ENCODE measurements at regions of chr17 and their contacts with region 1.

Region 1: DNA sequence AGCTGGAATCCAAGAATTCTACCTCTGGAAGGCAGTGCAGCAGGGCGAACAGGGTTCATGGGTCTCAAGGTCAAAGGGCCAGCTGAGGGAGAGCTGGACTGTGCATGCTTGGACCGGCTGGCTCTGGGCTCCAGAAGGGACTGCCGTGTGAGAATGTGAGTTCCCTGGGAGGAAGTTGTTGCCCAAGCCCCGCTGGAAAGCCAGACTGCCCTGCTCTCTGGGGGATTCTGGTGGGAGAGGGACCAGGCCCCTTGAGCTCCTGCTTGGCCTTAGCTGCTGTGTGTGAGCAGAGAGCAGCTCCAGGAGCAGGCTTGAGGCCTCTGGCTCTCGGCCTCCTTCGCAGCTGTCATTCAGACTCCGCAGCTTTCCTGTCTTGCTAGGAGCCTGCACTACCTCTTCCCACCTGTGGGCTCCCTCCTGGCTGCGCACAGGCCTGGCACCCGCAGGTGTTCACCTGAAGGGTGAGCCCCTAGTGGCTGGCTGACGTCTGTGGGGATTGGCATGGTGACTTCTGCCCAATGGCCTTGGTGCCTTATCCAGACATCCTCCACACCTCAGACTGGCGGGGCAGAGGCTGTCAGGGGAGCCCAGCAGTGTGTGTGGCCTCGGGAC is 84.8 kb downstream of the NT5M start:
- DNase-seq: peak; percentile 75
- ATAC-seq: peak; percentile 99
- H3K4me3 Mint-ChIP-seq: no peak overlapping the region
- H3K27ac Mint-ChIP-seq: no peak overlapping the region
- H3K4me1 Mint-ChIP-seq: no peaks in the 10 kb centered on the region
- H3K27me3 Mint-ChIP-seq: no peaks in the 10 kb centered on the region
- CTCF ChIP-seq: peak; percentile 43; the same call in 1 of the 2 replicates

Region 2: GRCh38 chr17:17322516-17323510 is 65.1 kb before region 1 on chr17:
- CTCF ChIA-PET with region 1: no interaction called
- POLR2A ChIA-PET with region 1: no interaction called
- DNase-seq: no peak
- ATAC-seq: no peak
- H3K4me3 Mint-ChIP-seq: no peak overlapping the region
- H3K27ac Mint-ChIP-seq: no peak overlapping the region
- H3K4me1 Mint-ChIP-seq: no peaks in the 10 kb centered on the region
- H3K27me3 Mint-ChIP-seq: no peaks in the 10 kb centered on the region
- CTCF ChIP-seq: no peak

Region 3: DNA sequence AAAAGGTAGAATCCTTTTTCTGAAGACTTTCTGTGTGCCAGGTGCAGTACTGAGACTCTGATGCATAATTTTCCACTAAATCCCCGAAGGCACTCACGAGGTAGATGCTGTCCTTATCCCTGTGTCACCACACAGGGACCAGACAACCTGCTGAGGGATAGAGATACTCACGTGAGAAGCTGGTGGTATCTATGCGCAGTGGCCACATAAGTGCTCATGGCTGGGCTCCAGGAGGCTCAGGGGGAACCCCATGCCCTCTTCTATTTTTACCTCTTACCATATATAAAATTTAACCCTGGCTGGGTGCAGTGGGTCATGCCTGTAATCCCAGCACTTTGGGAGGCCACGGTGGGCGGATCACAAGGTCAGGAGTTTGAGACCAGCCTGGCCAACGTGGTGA is 46.5 kb before region 1 on chr17:
- CTCF ChIA-PET with region 1: no interaction called
- POLR2A ChIA-PET with region 1: no interaction called
- DNase-seq: no peak
- ATAC-seq: no peak
- H3K4me3 Mint-ChIP-seq: no peak overlapping the region
- H3K27ac Mint-ChIP-seq: no peak overlapping the region
- H3K4me1 Mint-ChIP-seq: no peaks in the 10 kb centered on the region
- H3K27me3 Mint-ChIP-seq: no peaks in the 10 kb centered on the region
- CTCF ChIP-seq: no peak

Region 4: GRCh38 chr17:17366941-17367875 is 20.7 kb before region 1 on chr17:
- CTCF ChIA-PET with region 1: interaction called, 10 read pairs
- POLR2A ChIA-PET with region 1: no interaction called
- DNase-seq: no peak
- ATAC-seq: no peak
- H3K4me3 Mint-ChIP-seq: no peak overlapping the region
- H3K27ac Mint-ChIP-seq: no peak overlapping the region
- H3K4me1 Mint-ChIP-seq: peaks cover 16% of the 10 kb centered on the region
- H3K27me3 Mint-ChIP-seq: no peaks in the 10 kb centered on the region
- CTCF ChIP-seq: no peak

Region 5: DNA sequence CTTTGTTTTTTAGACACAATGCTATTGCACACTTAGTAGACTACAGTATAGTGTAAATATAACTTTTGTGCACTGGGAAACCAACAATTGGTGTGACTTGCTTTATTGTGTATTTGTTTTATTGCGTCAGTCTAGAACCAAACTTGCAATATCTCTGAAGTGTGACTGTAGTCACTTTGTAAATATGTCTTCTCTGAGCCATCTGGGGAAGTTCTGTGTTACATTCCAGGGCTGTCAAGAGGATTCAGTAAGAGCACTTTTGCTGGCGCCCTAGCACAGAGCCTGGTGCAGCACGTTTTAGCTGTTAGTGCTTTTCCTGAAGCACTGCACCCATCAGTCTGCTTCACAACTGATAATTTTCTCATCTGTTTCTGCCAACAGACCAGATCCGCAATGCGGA is 11.6 kb before region 1 on chr17:
- CTCF ChIA-PET with region 1: interaction called, 12 read pairs
- POLR2A ChIA-PET with region 1: no interaction called
- DNase-seq: no peak
- ATAC-seq: no peak
- H3K4me3 Mint-ChIP-seq: no peak overlapping the region
- H3K27ac Mint-ChIP-seq: no peak overlapping the region
- H3K4me1 Mint-ChIP-seq: peaks cover 2% of the 10 kb centered on the region; the same call in 1 of the 2 replicates
- H3K27me3 Mint-ChIP-seq: no peaks in the 10 kb centered on the region
- CTCF ChIP-seq: no peak